ENCODE measurements at regions of chr17 and their contacts with region 1.

Region 1: GRCh38 chr17:4498461-4499397 is at the start of gene SPNS2:
- DNase-seq: peak; percentile 89
- total RNA-seq, gene SPNS2: 16.2 to 20.9 TPM

Region 2: DNA sequence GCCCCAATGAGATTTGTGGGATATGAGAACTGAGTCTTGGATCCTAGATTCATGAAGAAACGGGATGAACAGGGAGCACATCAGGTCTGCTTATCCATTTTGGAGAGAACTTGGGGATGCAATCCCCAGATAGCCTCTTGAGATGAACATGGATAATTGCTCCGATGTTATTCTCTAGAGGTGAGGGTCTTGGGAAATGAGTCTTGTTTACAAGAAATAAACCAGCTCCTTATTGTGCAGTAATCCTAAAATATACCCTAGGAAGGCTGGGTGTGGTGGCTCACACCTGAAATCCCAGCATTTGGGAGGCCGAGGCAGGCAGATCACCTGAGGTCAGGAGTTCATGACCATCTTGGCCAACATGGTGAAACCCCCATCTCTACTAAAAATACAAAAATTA is 1394.4 kb before region 1 on chr17 and contains the start of gene OR1D2:
- intact Hi-C with region 1: no loop called
- DNase-seq: no peak
- total RNA-seq, gene OR1D2: not detected

Region 3: DNA sequence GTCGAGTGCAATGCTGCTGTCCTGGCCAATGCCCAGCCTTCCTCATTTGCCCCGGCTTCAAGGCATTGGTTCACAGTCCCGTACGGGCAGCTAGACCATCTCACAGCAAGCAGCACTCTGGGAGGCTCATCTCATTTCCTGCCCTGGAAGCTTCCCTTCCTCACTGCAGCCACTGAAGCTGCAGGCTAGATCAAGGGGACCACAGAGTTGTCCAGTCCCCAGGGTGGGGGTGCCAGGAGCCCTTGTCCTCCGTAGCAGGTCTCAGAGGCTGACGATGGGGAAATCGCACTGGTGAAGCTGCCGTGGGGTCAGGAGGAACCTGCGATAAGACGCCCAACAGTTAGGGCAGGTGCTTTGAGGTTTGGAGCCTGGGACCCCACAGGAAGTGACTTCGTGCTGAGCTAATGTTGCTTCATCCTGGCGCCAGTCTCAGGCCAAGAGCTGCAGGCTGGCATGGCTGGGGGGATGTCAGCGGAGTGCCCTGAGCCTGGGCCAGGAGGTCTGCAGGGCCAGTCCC is 65.2 kb before region 1 on chr17 and contains the start of gene SPNS3:
- intact Hi-C with region 1: loop called (anchors 2 to 10 kb)
- DNase-seq: no peak
- total RNA-seq, gene SPNS3: 0.24 to 0.32 TPM

Region 4: GRCh38 chr17:4565209-4566141 is 66.7 kb after region 1 on chr17:
- intact Hi-C with region 1: no loop called
- DNase-seq: peak; percentile 85